Activated CD4-positive, alpha-beta memory T cell treated with anti-CD3 and anti-CD28 coated beads for 36 hours (primary cell): ENCODE measurements at regions of chr19 and their contacts with region 1.

Region 1: GRCh38 chr19:54209811-54210494 is 9.3 kb downstream of the RPS9 start:
- DNase-seq: peak; percentile 37
- H3K4me3 Mint-ChIP-seq: peak overlapping the region; percentile 6
- H3K27ac Mint-ChIP-seq: peak overlapping the region; percentile 89
- H3K4me1 Mint-ChIP-seq: peaks cover 65% of the 10 kb centered on the region
- H3K27me3 Mint-ChIP-seq: no peaks in the 10 kb centered on the region

Region 2: GRCh38 chr19:54077334-54077733 is 132.6 kb before region 1 on chr19:
- CTCF ChIA-PET with region 1: no interaction called
- POLR2A ChIA-PET with region 1: no interaction called
- intact Hi-C with region 1: no loop called
- DNase-seq: no peak
- H3K4me3 Mint-ChIP-seq: no peak overlapping the region
- H3K27ac Mint-ChIP-seq: no peak overlapping the region
- H3K4me1 Mint-ChIP-seq: no peaks in the 10 kb centered on the region
- H3K27me3 Mint-ChIP-seq: peaks cover 3% of the 10 kb centered on the region

Region 3: DNA sequence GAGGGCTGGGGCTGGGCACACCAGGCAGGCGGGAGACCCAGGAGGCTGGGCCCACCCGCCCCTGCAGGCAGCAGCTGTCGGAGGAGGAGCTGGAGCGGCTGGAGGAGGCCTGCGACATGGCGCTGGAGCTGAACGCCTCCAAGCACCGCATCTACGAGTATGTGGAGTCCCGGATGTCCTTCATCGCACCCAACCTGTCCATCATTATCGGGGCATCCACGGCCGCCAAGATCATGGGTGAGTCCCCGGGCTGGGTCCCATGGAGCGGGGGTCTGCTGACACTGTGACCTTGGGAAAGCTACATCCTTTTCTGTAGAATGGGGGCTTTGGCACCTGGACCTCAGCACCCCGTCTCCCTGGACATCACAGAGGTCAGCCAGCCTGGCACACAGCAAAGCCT is 86.3 kb before region 1 on chr19:
- CTCF ChIA-PET with region 1: no interaction called
- POLR2A ChIA-PET with region 1: no interaction called
- intact Hi-C with region 1: no loop called
- DNase-seq: no peak
- H3K4me3 Mint-ChIP-seq: no peak overlapping the region
- H3K27ac Mint-ChIP-seq: no peak overlapping the region
- H3K4me1 Mint-ChIP-seq: no peaks in the 10 kb centered on the region
- H3K27me3 Mint-ChIP-seq: no peaks in the 10 kb centered on the region

Region 4: DNA sequence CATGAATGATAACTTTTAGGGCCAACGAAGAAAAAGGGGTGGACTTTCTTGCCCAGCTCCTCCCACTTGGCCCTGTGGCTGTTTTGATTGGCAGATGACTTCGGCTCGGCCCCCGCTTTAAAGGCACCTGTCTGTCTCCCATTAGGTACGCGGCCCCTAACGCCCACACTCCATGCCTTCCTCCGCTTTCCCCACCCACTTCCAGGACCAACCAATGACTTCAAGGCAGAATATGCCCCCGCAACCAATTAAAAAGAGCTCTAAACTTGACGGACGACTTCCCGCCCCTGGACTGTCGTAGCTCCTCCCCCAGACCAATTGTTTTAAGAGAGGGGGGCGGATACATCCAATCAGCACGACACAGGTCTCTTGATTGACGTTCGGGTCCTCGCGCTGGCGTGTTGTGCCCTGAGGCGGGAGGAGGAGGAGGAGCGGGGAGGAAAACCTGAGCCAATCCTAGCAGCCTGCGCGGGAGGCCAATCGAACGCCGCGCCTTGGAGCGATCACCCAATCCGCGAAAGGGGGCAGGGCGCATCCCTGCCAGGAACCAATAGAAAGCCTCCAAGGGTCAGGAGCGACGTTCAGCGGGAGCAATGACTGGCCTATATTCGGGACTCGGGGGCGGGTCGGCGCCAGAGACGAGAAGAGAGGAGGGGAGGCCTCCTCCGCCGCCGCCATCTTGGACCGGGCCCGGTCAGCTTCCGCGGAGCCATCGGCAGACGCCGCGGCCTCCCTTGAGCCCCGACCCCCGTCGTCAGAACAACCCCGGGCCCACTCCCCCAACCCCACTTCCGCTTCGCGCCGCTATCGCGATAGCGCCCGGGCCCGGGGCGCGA is 72.6 kb before region 1 on chr19 and contains the start of gene CNOT3:
- CTCF ChIA-PET with region 1: no interaction called
- POLR2A ChIA-PET with region 1: interaction called, 11 read pairs
- intact Hi-C with region 1: no loop called
- DNase-seq: peak; percentile 100
- H3K4me3 Mint-ChIP-seq: peak within 1 kb of the TSS; percentile 86
- H3K27ac Mint-ChIP-seq: peak within 1 kb of the TSS; percentile 87
- H3K4me1 Mint-ChIP-seq: peaks cover 52% of the 10 kb centered on the region
- H3K27me3 Mint-ChIP-seq: no peaks in the 10 kb centered on the region
- total RNA-seq, gene CNOT3: 54.6 to 58.7 TPM

Region 5: DNA sequence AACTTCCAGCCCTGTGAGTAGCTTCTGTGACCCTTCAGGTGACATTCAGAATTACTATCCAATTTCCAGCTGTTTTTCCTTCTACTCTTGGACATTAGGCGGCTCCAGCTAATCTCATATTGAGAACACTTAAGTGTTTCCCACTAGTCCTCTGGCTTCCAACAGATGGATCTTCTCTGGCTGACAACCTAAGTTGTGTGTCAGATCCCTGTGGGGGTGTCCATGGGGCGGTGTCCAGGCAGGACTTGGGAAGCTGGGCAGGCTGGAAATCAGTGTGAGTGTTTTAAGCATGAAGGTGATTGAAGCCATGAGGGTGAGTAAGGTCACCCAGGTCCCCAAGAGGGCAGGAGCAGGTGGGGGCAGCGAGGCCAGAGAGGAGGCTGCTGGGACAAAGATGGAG is 62.3 kb before region 1 on chr19:
- CTCF ChIA-PET with region 1: no interaction called
- POLR2A ChIA-PET with region 1: no interaction called
- intact Hi-C with region 1: no loop called
- DNase-seq: no peak
- H3K4me3 Mint-ChIP-seq: no peak overlapping the region
- H3K27ac Mint-ChIP-seq: no peak overlapping the region
- H3K4me1 Mint-ChIP-seq: no peaks in the 10 kb centered on the region
- H3K27me3 Mint-ChIP-seq: no peaks in the 10 kb centered on the region

Region 6: GRCh38 chr19:54189735-54190502 is 20.0 kb before region 1 on chr19:
- CTCF ChIA-PET with region 1: interaction called, 5 read pairs
- POLR2A ChIA-PET with region 1: interaction called, 103 read pairs
- intact Hi-C with region 1: loop called (anchors 2 kb)
- DNase-seq: peak; percentile 100
- H3K4me3 Mint-ChIP-seq: peak overlapping the region; percentile 85
- H3K27ac Mint-ChIP-seq: peak overlapping the region; percentile 99
- H3K4me1 Mint-ChIP-seq: peaks cover 31% of the 10 kb centered on the region
- H3K27me3 Mint-ChIP-seq: no peaks in the 10 kb centered on the region

Region 7: GRCh38 chr19:54248016-54248601 is 38.2 kb after region 1 on chr19:
- CTCF ChIA-PET with region 1: no interaction called
- POLR2A ChIA-PET with region 1: no interaction called
- intact Hi-C with region 1: loop called (anchors 5 kb)
- DNase-seq: peak; percentile 78
- H3K4me3 Mint-ChIP-seq: no peak overlapping the region
- H3K27ac Mint-ChIP-seq: no peak overlapping the region
- H3K4me1 Mint-ChIP-seq: peaks cover 20% of the 10 kb centered on the region
- H3K27me3 Mint-ChIP-seq: peaks cover 10% of the 10 kb centered on the region

Region 8: DNA sequence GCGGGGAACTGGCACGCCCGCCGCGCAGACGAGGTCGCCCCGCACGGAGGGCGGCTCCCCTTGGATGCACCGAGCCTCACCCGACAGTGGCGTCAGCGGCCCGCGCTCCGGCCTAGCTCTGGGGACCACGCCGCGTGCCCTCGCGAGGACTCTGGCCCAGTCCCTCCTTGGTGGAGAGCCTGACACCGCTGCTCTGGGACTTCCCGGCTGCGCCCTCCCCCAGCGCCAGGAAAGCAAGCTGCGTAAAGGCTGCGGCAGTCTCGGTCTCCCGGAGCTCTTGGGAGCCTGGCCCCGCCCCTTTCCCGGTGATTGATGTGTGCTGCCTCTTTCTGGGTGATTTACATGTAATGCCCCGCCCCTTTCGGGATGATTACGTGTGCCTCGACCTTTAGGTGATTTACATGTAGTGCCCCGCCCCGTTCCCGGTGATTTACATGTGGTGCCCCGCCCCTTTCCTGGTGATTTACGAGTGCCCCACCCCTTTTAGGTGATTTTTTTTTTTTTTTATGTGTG is 253.6 kb after region 1 on chr19 and contains the start of gene LENG9:
- CTCF ChIA-PET with region 1: no interaction called
- POLR2A ChIA-PET with region 1: no interaction called
- intact Hi-C with region 1: loop called (anchors 5 kb)
- DNase-seq: peak; percentile 99
- H3K4me3 Mint-ChIP-seq: peak within 1 kb of the TSS; percentile 78
- H3K27ac Mint-ChIP-seq: peak within 1 kb of the TSS; percentile 92
- H3K4me1 Mint-ChIP-seq: peaks cover 29% of the 10 kb centered on the region
- H3K27me3 Mint-ChIP-seq: no peaks in the 10 kb centered on the region
- total RNA-seq, gene LENG9: 5.3 to 5.6 TPM